ENCODE measurements at regions of chr2 and their contacts with region 1.

Region 1: GRCh38 chr2:232668805-232669444 is 28.2 kb upstream of the GIGYF2 start:
- DNase-seq: no peak
- ATAC-seq: peak; percentile 87
- H3K4me3 ChIP-seq: no peak overlapping the region
- H3K27ac ChIP-seq: no peak overlapping the region
- H3K4me1 ChIP-seq: peaks cover 14% of the 10 kb centered on the region
- H3K27me3 ChIP-seq: no peaks in the 10 kb centered on the region
- CTCF ChIP-seq: peak; percentile 88

Region 2: GRCh38 chr2:232421189-232421785 is 247.6 kb before region 1 on chr2:
- CTCF ChIA-PET with region 1: no interaction called
- POLR2A ChIA-PET with region 1: no interaction called
- in situ Hi-C with region 1: no loop called
- intact Hi-C with region 1: no loop called
- DNase-seq: no peak
- ATAC-seq: peak; percentile 33
- H3K4me3 ChIP-seq: peak overlapping the region; percentile 43 to 48
- H3K27ac ChIP-seq: 0 out of 2 replicates have a peak overlapping the region, but pooled peaks have one; percentile 44
- H3K4me1 ChIP-seq: peaks cover 3% of the 10 kb centered on the region; the same call in 1 of the 2 replicates
- H3K27me3 ChIP-seq: peaks cover 3% of the 10 kb centered on the region; the same call in 1 of the 2 replicates
- CTCF ChIP-seq: no peak

Region 3: DNA sequence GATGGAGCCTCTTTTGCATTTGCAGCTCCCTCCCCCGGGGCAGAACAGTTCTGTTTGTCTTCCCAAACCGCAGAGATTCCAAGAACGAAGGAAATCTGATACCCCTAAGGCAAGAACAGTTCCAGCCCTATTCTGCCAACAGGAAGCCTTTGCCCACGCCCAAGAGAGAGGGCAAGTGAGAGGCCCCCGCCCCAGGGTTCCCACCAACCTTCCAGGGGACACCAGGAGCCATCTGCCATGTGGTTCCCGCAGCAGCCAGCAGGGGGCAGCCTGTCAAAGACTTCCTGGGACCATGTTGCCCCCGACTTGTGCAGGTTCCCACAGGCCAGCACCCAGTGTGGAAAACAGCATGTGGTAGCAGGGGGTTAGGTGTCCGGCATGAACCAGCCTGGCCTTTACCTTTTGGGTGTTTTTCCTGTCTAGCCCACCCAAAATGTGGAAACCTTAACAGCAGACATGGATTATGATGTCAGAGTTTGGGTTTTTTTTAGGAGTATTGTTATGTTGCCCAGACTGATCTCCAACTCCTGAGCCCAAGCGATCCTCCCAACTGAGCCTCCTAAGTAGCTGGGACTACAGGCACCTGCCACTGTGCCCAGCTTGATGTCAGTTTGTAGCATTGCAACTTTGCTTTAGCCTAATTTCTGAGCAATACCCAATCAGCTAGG is 57.2 kb before region 1 on chr2:
- CTCF ChIA-PET with region 1: interaction called, 4 read pairs
- POLR2A ChIA-PET with region 1: no interaction called
- in situ Hi-C with region 1: no loop called
- intact Hi-C with region 1: loop called (anchors 1 kb)
- DNase-seq: peak; percentile 30
- ATAC-seq: peak; percentile 92
- H3K4me3 ChIP-seq: no peak overlapping the region
- H3K27ac ChIP-seq: peak overlapping the region; percentile 70
- H3K4me1 ChIP-seq: peaks cover 28% of the 10 kb centered on the region
- H3K27me3 ChIP-seq: no peaks in the 10 kb centered on the region
- CTCF ChIP-seq: peak; percentile 94

Region 4: GRCh38 chr2:232623783-232624727 is 44.9 kb before region 1 on chr2:
- CTCF ChIA-PET with region 1: interaction called, 13 read pairs
- POLR2A ChIA-PET with region 1: no interaction called
- in situ Hi-C with region 1: no loop called
- intact Hi-C with region 1: no loop called
- DNase-seq: no peak
- ATAC-seq: peak; percentile 87
- H3K4me3 ChIP-seq: no peak overlapping the region
- H3K27ac ChIP-seq: peak overlapping the region; percentile 52
- H3K4me1 ChIP-seq: peaks cover 23% of the 10 kb centered on the region
- H3K27me3 ChIP-seq: no peaks in the 10 kb centered on the region; the same call in 1 of the 2 replicates
- CTCF ChIP-seq: no peak

Region 5: GRCh38 chr2:232652505-232652851 is 16.4 kb before region 1 on chr2:
- CTCF ChIA-PET with region 1: no interaction called
- POLR2A ChIA-PET with region 1: no interaction called
- in situ Hi-C with region 1: no loop called
- intact Hi-C with region 1: no loop called
- DNase-seq: no peak
- ATAC-seq: no peak
- H3K4me3 ChIP-seq: no peak overlapping the region
- H3K27ac ChIP-seq: peak overlapping the region; percentile 25; the same call in 1 of the 2 replicates
- H3K4me1 ChIP-seq: peaks cover 16% of the 10 kb centered on the region
- H3K27me3 ChIP-seq: no peaks in the 10 kb centered on the region
- CTCF ChIP-seq: no peak